Transverse colon (tissue), 4 donors: ENCODE measurements at regions of chrX and their contacts with region 1.

Region 1: GRCh38 chrX:14029425-14030173 is at the start of gene GEMIN8:
- DNase-seq: peak; percentile 91
- H3K4me3 ChIP-seq: peak within 1 kb of the TSS; percentile 29 to 77 (median 64)
- H3K27ac ChIP-seq: peak within 1 kb of the TSS; percentile 85 to 92 (median 88)
- H3K4me1 ChIP-seq: peaks cover 0 to 11% (median 2%) of the 10 kb centered on the region in 4 donors
- H3K27me3 ChIP-seq: no peaks in the 10 kb centered on the region
- CTCF ChIP-seq: no peak
- EP300 ChIP-seq: no peak
- POLR2A ChIP-seq: peak; percentile 83
- total RNA-seq, gene GEMIN8: 8.6 to 22.1 (median 12.6) TPM

Region 2: GRCh38 chrX:13506574-13506973 is 523.0 kb before region 1 on chrX:
- in situ Hi-C with region 1: loop called (anchors 5 to 25 kb)
- intact Hi-C with region 1: loop called (anchors 5 kb)
- DNase-seq: peak; percentile 56
- H3K4me3 ChIP-seq: no peak overlapping the region
- H3K27ac ChIP-seq: no peak overlapping the region
- H3K4me1 ChIP-seq: no peaks in the 10 kb centered on the region
- H3K27me3 ChIP-seq: no peaks in the 10 kb centered on the region
- CTCF ChIP-seq: peak; percentile 64 to 87 (median 71)
- EP300 ChIP-seq: no peak
- POLR2A ChIP-seq: no peak

Region 3: GRCh38 chrX:13653022-13653693 is 376.4 kb before region 1 on chrX and contains the start of gene TCEANC:
- in situ Hi-C with region 1: loop called in 3 of 4 experiments (anchors 5 to 25 kb)
- intact Hi-C with region 1: loop called (anchors 10 kb)
- DNase-seq: peak; percentile 97
- H3K4me3 ChIP-seq: peak within 1 kb of the TSS; percentile 41 to 66 (median 54)
- H3K27ac ChIP-seq: peak within 1 kb of the TSS; percentile 86 to 98 (median 94)
- H3K4me1 ChIP-seq: peaks cover 0 to 13% (median 7%) of the 10 kb centered on the region in 4 donors
- H3K27me3 ChIP-seq: no peaks in the 10 kb centered on the region
- CTCF ChIP-seq: no peak
- EP300 ChIP-seq: no peak
- POLR2A ChIP-seq: peak; percentile 77
- total RNA-seq, gene TCEANC: 0.20 to 9.1 (median 3.7) TPM

Region 4: DNA sequence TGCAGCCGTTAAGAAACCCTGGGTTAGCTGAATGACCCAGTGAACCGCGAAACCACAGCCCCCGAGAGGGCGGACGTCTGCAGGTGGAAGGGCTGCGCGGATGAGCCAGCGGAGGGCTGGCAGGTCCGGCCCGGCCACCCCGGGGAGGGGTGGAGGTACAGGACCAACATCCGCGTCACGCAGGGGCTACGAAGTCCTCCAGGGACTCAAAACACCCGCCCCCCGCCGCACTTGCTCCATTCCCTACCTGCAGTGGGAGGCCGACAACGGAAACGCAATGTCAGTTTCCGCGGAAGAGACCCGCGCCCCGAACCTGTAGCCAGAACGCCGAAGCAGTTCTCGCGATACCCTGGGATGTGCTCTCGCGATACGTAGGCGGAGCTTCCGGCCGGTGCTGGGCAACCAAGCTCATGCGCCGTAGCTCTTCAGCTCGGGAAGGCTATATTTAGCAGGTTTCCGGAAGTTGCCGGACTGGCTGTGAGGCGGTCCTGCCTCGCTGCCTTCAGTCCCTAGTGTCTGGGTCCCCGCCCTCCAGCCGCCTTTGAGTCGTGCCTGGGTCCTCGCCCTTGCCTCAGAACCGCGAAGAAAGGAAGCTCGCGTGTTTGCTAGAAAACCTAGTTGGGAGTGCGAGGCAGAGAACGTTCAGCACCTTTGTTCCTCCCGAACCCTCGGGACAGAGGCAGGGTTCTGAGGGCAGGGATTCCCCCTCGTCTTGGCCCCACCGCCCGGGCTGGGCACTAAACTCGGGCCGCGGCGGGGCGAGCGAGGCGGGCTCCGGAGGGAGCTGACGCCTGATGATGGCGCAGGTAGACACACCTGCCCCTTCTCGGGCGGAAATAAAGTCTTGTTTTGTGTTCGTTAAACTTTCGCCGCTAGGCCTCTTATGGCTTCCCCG is 295.1 kb before region 1 on chrX and contains the starts of genes OFD1 and TRAPPC2:
- in situ Hi-C with region 1: loop called in 1 of 4 experiments (anchors 25 kb)
- intact Hi-C with region 1: no loop called
- DNase-seq: peak; percentile 97
- H3K4me3 ChIP-seq: peak within 1 kb of the TSS; percentile 67 to 90 (median 82)
- H3K27ac ChIP-seq: peak within 1 kb of the TSS; percentile 91 to 97 (median 95)
- H3K4me1 ChIP-seq: peaks cover 0 to 33% (median 0%) of the 10 kb centered on the region in 4 donors
- H3K27me3 ChIP-seq: no peaks in the 10 kb centered on the region
- CTCF ChIP-seq: peak in 1 of 5 experiments; percentile 16
- EP300 ChIP-seq: no peak
- POLR2A ChIP-seq: peak; percentile 98
- total RNA-seq, gene OFD1: 27.2 to 184 (median 62.8) TPM
- total RNA-seq, gene TRAPPC2: 14.2 to 25.9 (median 15.1) TPM

Region 5: GRCh38 chrX:14133912-14134311 is 104.3 kb after region 1 on chrX:
- in situ Hi-C with region 1: no loop called
- intact Hi-C with region 1: no loop called
- DNase-seq: no peak
- H3K4me3 ChIP-seq: no peak overlapping the region
- H3K27ac ChIP-seq: no peak overlapping the region
- H3K4me1 ChIP-seq: no peaks in the 10 kb centered on the region
- H3K27me3 ChIP-seq: no peaks in the 10 kb centered on the region
- CTCF ChIP-seq: no peak
- EP300 ChIP-seq: no peak
- POLR2A ChIP-seq: no peak

Region 6: GRCh38 chrX:14228611-14229010 is 199.0 kb after region 1 on chrX:
- in situ Hi-C with region 1: no loop called
- intact Hi-C with region 1: no loop called
- DNase-seq: no peak
- H3K4me3 ChIP-seq: no peak overlapping the region
- H3K27ac ChIP-seq: no peak overlapping the region
- H3K4me1 ChIP-seq: no peaks in the 10 kb centered on the region
- H3K27me3 ChIP-seq: no peaks in the 10 kb centered on the region
- CTCF ChIP-seq: no peak
- EP300 ChIP-seq: no peak
- POLR2A ChIP-seq: no peak

Region 7: DNA sequence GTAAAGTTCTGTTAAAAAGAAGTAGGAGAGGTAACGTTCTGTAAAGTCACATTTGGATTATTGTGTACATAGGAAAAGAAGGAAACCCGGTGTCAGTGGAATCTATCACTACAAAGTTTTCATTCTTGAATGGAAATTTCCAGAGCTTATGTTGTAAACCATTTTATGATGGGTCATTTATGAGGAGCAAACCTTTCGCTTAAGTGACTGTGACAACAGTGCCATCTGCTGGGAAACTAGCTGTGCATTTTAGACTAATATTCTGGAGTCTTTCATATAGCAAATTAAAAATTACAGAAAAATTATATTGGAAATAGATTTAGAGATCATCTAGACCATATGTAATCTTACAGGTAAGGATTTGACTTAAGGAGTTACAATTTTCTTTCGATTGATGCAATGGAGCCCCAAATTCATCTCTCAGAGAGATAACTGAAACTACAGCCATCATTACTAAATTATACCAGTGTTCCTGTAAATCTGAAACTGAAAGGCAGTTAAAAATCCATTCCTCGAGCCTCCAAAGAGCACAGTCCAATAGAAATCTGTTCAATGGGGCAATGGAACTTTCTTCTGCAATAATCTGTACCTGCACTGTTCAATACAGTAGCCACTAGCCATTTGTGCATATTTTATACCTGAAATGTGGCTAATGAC is 1213.4 kb after region 1 on chrX:
- in situ Hi-C with region 1: loop called in 2 of 4 experiments (anchors 25 kb)
- intact Hi-C with region 1: no loop called
- DNase-seq: peak; percentile 40
- H3K4me3 ChIP-seq: no peak overlapping the region
- H3K27ac ChIP-seq: no peak overlapping the region
- H3K4me1 ChIP-seq: no peaks in the 10 kb centered on the region
- H3K27me3 ChIP-seq: no peaks in the 10 kb centered on the region
- CTCF ChIP-seq: peak; percentile 32 to 52 (median 45)
- EP300 ChIP-seq: no peak
- POLR2A ChIP-seq: no peak